ENCODE measurements at regions of chr17 and their contacts with region 1.

Region 1: DNA sequence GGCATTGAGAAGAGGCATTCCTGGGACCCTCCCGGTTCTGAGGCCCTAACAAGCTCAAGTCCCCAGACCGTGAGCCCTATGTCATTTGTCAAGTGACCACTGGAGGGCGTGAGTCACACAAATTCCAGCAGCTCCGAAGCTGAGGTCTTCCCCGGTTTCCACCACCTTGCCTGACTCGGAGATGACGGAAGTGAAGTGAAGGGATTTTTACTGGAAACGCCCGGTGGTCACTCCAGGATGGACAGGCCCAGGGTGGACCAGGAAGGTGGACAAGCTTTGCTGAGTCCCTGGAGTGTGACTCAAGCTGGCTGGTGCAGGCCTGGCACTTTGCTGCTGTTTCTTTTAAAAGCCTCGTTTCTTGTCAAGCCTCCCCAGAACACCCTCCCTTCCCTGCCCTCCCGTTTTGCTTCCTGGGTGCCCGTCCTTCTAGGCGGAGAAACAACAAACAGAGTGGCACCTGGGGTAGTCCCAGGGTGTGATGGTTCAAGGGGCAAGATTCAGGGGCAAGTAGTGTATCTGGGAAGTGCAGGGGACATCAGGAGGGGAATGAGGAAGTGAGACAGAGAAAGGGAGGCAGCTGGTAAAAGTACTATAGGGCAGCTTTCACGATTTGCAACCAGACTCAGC is 5.3 kb upstream of the NOS2 start:
- DNase-seq: peak; percentile 88
- ATAC-seq: peak; percentile 73
- H3K4me3 Mint-ChIP-seq: peak overlapping the region; percentile 55
- H3K27ac Mint-ChIP-seq: peak overlapping the region; percentile 96
- H3K4me1 Mint-ChIP-seq: peaks cover 46% of the 10 kb centered on the region
- H3K27me3 Mint-ChIP-seq: peaks cover under 1% of the 10 kb centered on the region

Region 2: DNA sequence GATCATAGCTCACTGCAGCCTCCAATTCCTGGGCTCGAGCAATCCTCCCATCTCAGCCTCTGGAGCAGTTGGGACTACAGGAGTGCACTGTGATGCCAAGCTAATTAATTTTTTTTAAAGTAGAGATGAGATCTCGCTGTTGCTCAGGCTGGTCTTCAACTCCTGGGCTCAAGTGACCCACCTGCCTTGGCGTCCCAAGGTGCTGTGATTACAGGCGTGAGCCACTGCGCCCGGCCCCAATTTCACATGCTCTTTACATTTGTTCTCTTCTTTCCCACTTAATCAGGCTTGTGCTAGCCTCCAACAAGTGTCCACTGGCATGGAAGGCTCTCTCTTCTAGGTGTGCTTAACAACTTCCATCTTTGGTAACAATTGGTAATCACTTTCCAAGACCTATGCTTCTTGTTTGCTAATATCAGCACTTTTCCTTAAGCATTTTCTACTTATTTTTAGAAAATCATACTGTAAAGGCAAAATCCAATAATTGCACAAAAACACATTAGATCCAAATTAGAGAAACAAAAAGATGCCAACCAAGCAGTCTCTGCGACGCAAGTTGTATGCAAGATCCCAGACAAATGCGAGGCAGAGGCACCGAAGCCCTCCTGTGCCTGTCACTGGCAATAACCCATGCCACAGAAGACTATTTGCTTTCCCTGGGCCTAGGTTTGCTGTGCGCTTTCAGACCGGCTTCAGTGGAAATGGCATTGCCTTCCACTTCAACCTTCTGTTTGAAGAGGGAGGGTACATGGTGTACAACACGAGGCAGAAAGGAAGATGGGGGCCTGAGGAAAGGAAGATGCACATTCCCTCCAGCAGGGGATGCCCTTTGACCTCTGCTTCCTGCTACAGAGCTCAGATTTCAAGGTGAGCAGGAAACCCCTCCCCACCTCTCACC is 57.9 kb before region 1 on chr17:
- CTCF ChIA-PET with region 1: no interaction called
- POLR2A ChIA-PET with region 1: no interaction called
- DNase-seq: no peak
- ATAC-seq: no peak
- H3K4me3 Mint-ChIP-seq: no peak overlapping the region
- H3K27ac Mint-ChIP-seq: no peak overlapping the region
- H3K4me1 Mint-ChIP-seq: no peaks in the 10 kb centered on the region
- H3K27me3 Mint-ChIP-seq: no peaks in the 10 kb centered on the region

Region 3: GRCh38 chr17:27793168-27793905 is 12.3 kb before region 1 on chr17:
- CTCF ChIA-PET with region 1: interaction called, 14 read pairs
- POLR2A ChIA-PET with region 1: no interaction called
- DNase-seq: no peak
- ATAC-seq: peak; percentile 60
- H3K4me3 Mint-ChIP-seq: peak overlapping the region; percentile 47
- H3K27ac Mint-ChIP-seq: no peak overlapping the region
- H3K4me1 Mint-ChIP-seq: peaks cover 7% of the 10 kb centered on the region
- H3K27me3 Mint-ChIP-seq: peaks cover 42% of the 10 kb centered on the region

Region 4: GRCh38 chr17:27846042-27846655 is 40.5 kb after region 1 on chr17:
- CTCF ChIA-PET with region 1: interaction called, 32 read pairs
- POLR2A ChIA-PET with region 1: interaction called, 9 read pairs
- DNase-seq: peak; percentile 73
- ATAC-seq: peak; percentile 84
- H3K4me3 Mint-ChIP-seq: peak overlapping the region; percentile 64
- H3K27ac Mint-ChIP-seq: peak overlapping the region; percentile 74
- H3K4me1 Mint-ChIP-seq: peaks cover 36% of the 10 kb centered on the region
- H3K27me3 Mint-ChIP-seq: peaks cover 5% of the 10 kb centered on the region

Region 5: GRCh38 chr17:27879987-27880608 is 74.5 kb after region 1 on chr17:
- CTCF ChIA-PET with region 1: interaction called, 654 read pairs
- POLR2A ChIA-PET with region 1: interaction called, 52 read pairs
- DNase-seq: peak; percentile 81
- ATAC-seq: peak; percentile 90
- H3K4me3 Mint-ChIP-seq: no peak overlapping the region
- H3K27ac Mint-ChIP-seq: peak overlapping the region; percentile 55
- H3K4me1 Mint-ChIP-seq: peaks cover 32% of the 10 kb centered on the region
- H3K27me3 Mint-ChIP-seq: no peaks in the 10 kb centered on the region

Region 6: DNA sequence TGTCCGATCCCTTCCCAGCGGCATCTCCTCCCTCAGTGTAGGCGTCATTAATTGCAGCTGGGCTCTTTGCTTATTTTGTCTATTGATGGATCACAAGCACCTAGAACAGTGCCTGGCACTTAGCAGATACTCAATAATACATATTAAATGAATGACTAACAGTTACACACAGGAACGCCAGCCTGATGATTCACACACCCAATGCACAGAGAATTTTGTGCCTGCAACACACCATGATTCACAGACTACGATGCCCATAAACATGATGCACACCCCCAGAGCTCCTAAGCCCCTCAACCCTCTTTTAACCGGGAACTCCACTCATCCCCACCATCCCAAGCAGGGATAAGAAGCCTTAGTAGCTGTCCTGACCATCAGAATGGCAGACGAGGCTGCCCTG is 446.8 kb after region 1 on chr17:
- CTCF ChIA-PET with region 1: interaction called, 24 read pairs
- POLR2A ChIA-PET with region 1: no interaction called
- DNase-seq: no peak
- ATAC-seq: no peak
- H3K4me3 Mint-ChIP-seq: no peak overlapping the region
- H3K27ac Mint-ChIP-seq: no peak overlapping the region
- H3K4me1 Mint-ChIP-seq: peaks cover 8% of the 10 kb centered on the region
- H3K27me3 Mint-ChIP-seq: peaks cover 11% of the 10 kb centered on the region